ENCODE measurements at regions of chr4 and their contacts with region 1.

Region 1: GRCh38 chr4:154551872-154552686 is 1.9 kb upstream of the PLRG1 start:
- DNase-seq: peak; percentile 83
- H3K4me3 Mint-ChIP-seq: no peak overlapping the region
- H3K27ac Mint-ChIP-seq: no peak overlapping the region
- H3K4me1 Mint-ChIP-seq: peaks cover 18% of the 10 kb centered on the region
- H3K27me3 Mint-ChIP-seq: no peaks in the 10 kb centered on the region

Region 2: DNA sequence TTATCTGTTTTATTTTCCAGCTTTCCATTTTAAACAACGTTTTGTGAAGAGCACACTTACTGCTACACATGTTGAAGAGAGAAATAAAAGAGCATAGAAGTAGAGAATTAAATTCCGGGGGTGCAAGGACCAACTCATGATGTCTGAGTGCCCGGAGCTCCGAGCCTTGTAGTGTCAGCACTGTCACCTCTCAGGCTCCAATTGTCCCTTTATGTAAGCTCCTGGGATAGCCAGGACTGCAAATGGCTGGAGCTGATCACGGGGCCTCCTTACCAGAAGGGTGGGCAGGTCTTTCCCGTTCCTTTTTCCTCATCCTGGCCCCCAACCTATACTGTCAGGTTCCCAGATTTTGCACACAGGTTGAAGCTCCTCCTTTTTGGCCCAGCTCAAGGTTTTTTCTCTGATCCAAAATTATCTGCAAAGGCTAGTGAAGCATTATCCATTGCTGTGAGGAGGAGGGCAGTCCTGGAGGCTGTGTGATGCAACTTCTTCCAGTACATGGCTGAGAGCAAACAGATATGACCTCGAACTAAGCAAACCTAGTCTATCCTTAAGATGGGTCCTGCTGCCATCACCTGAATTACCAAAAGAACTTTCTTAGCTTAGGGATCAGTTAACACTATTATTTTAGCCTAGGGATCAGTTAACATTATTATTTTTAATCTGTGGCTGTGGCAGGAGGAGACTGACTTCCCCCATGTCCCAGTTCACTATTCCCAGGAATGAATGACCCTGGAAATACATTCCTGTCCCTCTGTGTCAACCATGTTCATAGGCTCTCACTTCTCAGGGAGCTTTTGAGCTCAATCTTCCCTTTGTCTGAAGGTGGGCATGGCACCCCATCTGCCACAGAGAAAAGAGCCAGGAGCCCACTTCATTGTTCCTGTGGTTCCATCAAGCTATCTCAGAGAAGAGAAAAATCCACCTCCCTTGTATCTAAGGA is 60.7 kb after region 1 on chr4 and contains the start of gene FGG:
- CTCF ChIA-PET with region 1: interaction called, 190 read pairs
- intact Hi-C with region 1: no loop called
- DNase-seq: no peak
- H3K4me3 Mint-ChIP-seq: no peak within 1 kb of the TSS
- H3K27ac Mint-ChIP-seq: no peak within 1 kb of the TSS
- H3K4me1 Mint-ChIP-seq: peaks cover 10% of the 10 kb centered on the region
- H3K27me3 Mint-ChIP-seq: peaks cover 19% of the 10 kb centered on the region
- total RNA-seq, gene FGG: not detected

Region 3: DNA sequence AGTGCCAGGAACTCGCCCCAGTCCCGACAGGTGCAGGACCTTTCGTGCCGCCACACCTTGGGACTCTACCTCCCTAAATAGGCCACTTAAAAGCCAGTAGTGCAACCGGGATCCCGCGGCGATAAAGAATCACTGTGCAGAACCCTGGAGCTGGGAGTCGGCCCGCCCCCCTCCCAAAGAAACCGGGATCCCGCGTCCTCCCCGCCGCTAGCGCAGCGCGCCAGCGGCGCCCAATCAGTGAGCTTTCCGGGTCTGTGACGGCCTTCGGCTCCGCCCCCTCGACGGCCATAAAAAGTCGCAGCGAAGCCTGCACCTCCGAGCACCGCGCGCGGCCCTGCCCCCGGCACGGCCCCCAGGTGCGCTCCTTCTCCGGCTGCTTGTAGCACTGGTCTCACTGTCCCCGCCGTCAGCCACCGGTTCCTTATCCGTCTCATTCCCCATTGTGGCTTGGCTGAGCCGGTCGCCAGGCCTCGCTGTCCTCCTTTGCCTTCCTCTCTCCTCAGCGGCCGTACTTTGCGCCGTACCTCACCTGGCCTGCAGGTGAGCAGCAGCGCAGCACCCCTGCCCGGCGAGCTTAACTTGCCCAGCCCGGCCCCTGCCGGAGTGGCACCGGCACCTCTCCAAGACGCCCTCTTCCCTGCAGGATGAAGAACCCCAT is 191.7 kb after region 1 on chr4 and contains the start of gene LRAT:
- CTCF ChIA-PET with region 1: no interaction called
- intact Hi-C with region 1: loop called (anchors 2 kb)
- DNase-seq: peak; percentile 49
- H3K4me3 Mint-ChIP-seq: peak within 1 kb of the TSS; percentile 73
- H3K27ac Mint-ChIP-seq: no peak within 1 kb of the TSS
- H3K4me1 Mint-ChIP-seq: peaks cover 20% of the 10 kb centered on the region
- H3K27me3 Mint-ChIP-seq: peaks cover 67% of the 10 kb centered on the region
- total RNA-seq, gene LRAT: not detected

Region 4: DNA sequence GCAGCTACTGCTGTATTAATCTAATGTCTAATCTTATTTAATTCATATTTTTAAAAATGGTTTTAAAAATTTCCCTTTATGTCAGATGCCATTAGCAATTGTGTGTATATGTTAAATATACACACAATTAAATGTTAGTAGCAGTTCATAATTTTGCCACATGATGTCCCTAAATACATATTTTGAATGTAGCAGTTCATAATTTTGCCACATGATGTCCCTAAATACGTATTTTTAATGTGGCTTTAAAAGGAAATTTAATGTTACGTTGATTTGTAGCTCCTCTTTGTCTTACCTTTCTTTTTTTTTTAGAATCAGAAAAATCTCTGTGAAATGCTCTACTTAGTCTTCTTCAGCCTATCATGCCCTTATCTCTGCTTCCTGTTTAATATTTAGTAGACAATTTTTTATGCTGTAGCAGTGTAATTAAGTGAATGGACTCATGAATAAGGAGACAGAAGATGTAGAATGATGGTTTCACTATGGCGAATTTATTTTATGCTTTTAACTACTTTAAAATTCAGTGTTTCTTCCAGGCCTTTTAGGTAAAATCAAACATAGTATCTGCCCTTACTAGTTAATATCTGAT is 255.1 kb after region 1 on chr4:
- CTCF ChIA-PET with region 1: no interaction called
- intact Hi-C with region 1: loop called (anchors 1 kb)
- DNase-seq: no peak
- H3K4me3 Mint-ChIP-seq: no peak overlapping the region
- H3K27ac Mint-ChIP-seq: no peak overlapping the region
- H3K4me1 Mint-ChIP-seq: no peaks in the 10 kb centered on the region
- H3K27me3 Mint-ChIP-seq: peaks cover 5% of the 10 kb centered on the region

Region 5: DNA sequence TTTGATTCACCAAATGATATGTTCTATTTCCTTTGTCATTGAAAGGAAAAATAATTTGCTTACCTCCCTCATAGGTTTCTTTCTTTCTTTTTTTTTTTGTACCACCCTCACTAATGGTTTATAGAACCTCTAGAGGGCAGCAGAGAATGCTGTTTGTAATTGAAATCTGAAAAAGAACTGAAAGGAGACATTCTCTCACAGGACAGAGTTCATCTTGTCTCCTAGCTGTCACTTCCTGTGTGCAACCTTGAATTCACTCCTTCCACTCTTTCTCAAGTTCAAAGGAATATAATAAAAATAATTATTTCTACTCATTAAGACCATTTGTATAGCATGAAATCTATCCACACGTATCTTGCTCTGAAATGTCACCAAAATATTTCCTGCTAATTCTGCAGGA is 1257.8 kb after region 1 on chr4:
- CTCF ChIA-PET with region 1: no interaction called
- intact Hi-C with region 1: loop called (anchors 5 kb)
- DNase-seq: peak; percentile 29
- H3K4me3 Mint-ChIP-seq: no peak overlapping the region
- H3K27ac Mint-ChIP-seq: no peak overlapping the region
- H3K4me1 Mint-ChIP-seq: no peaks in the 10 kb centered on the region
- H3K27me3 Mint-ChIP-seq: no peaks in the 10 kb centered on the region